CD8-positive, alpha-beta T cell (primary cell): ENCODE measurements at regions of chr6 and their contacts with region 1.

Region 1: GRCh38 chr6:107847844-107848802 is 24.0 kb upstream of the SCML4 start:
- DNase-seq: peak; percentile 62 to 93 (median 79)
- ATAC-seq: peak; percentile 89
- H3K4me3 ChIP-seq: peak overlapping the region; percentile 54 to 62
- H3K4me3 Mint-ChIP-seq: peak overlapping the region; percentile 82
- H3K27ac ChIP-seq: peak overlapping the region in 1 of 2 experiments; percentile 43
- H3K27ac Mint-ChIP-seq: peak overlapping the region; percentile 85
- H3K4me1 ChIP-seq: peaks cover 14% of the 10 kb centered on the region
- H3K4me1 Mint-ChIP-seq: peaks cover 24% of the 10 kb centered on the region
- H3K27me3 ChIP-seq: no peaks in the 10 kb centered on the region
- H3K27me3 Mint-ChIP-seq: no peaks in the 10 kb centered on the region
- CTCF ChIP-seq: peak; percentile 97

Region 2: GRCh38 chr6:107691062-107691751 is 156.9 kb before region 1 on chr6:
- CTCF ChIA-PET with region 1: interaction called, 13 read pairs
- POLR2A ChIA-PET with region 1: no interaction called
- intact Hi-C with region 1: no loop called
- DNase-seq: no peak
- ATAC-seq: no peak
- H3K4me3 ChIP-seq: no peak overlapping the region
- H3K4me3 Mint-ChIP-seq: no peak overlapping the region
- H3K27ac ChIP-seq: no peak overlapping the region
- H3K27ac Mint-ChIP-seq: no peak overlapping the region
- H3K4me1 ChIP-seq: no peaks in the 10 kb centered on the region
- H3K4me1 Mint-ChIP-seq: no peaks in the 10 kb centered on the region
- H3K27me3 ChIP-seq: no peaks in the 10 kb centered on the region
- H3K27me3 Mint-ChIP-seq: no peaks in the 10 kb centered on the region
- CTCF ChIP-seq: no peak

Region 3: DNA sequence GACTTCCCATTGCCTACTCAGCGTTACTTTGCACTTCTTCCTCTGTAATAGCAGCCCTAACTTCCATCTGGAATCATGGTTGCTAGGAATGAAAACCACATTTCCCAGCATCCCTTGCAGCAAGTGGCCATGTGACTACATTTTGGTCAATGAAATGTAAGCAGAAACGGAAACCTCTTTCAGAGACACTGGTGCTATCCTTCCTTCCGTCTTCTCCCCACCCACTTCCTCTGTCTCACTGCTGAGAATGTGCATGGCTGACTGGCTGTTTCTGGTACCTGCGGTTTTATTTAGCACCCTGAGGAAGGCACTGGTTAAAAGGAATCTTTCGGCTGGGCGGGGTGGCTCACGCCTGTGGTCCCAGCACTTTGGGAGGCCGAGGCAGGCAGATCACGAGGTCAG is 131.4 kb before region 1 on chr6:
- CTCF ChIA-PET with region 1: interaction called, 246 read pairs
- POLR2A ChIA-PET with region 1: interaction called, 5 read pairs
- intact Hi-C with region 1: no loop called
- DNase-seq: peak; percentile 46 to 95 (median 76)
- ATAC-seq: peak; percentile 85
- H3K4me3 ChIP-seq: no peak overlapping the region
- H3K4me3 Mint-ChIP-seq: peak overlapping the region; percentile 68
- H3K27ac ChIP-seq: peak overlapping the region in 1 of 2 experiments; percentile 79
- H3K27ac Mint-ChIP-seq: peak overlapping the region; percentile 91
- H3K4me1 ChIP-seq: peaks cover 54% of the 10 kb centered on the region
- H3K4me1 Mint-ChIP-seq: peaks cover 77% of the 10 kb centered on the region
- H3K27me3 ChIP-seq: no peaks in the 10 kb centered on the region
- H3K27me3 Mint-ChIP-seq: no peaks in the 10 kb centered on the region
- CTCF ChIP-seq: no peak

Region 4: DNA sequence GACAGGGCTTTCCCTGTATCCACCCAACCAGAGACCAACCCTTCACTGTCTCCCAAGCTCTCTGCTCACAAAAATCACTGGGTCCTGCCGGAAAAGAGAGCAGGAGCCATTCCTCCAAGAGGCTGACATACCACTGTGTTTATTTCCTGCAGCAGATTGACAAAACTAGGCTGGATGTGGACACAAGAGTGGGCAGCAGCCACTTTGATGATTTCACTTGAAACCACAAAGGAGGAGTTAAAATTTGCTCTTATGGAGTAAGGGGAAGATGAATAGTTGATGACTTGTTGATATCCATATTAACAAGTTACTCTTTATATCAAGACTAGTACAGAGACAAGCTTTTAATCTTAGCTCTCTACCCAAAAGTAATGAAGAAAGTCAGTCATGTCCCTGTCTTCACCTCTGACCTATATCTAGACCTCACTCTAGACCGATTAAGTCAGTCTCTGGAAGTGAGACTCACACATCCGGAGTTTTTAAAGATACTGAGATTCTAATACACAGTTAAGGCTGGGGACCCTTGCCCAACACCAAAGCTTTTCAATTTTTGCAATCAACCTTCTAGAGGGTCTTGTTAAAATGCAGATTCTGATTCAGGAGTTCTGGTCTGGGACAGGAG is 97.8 kb before region 1 on chr6:
- CTCF ChIA-PET with region 1: interaction called, 52 read pairs
- POLR2A ChIA-PET with region 1: no interaction called
- intact Hi-C with region 1: no loop called
- DNase-seq: no peak
- ATAC-seq: no peak
- H3K4me3 ChIP-seq: no peak overlapping the region
- H3K4me3 Mint-ChIP-seq: no peak overlapping the region
- H3K27ac ChIP-seq: no peak overlapping the region
- H3K27ac Mint-ChIP-seq: no peak overlapping the region
- H3K4me1 ChIP-seq: peaks cover 22% of the 10 kb centered on the region
- H3K4me1 Mint-ChIP-seq: peaks cover 63% of the 10 kb centered on the region
- H3K27me3 ChIP-seq: no peaks in the 10 kb centered on the region
- H3K27me3 Mint-ChIP-seq: no peaks in the 10 kb centered on the region
- CTCF ChIP-seq: no peak

Region 5: GRCh38 chr6:107786709-107787588 is 61.2 kb before region 1 on chr6:
- CTCF ChIA-PET with region 1: interaction called, 34 read pairs
- POLR2A ChIA-PET with region 1: interaction called, 5 read pairs
- intact Hi-C with region 1: no loop called
- DNase-seq: peak in 8 of 9 experiments; percentile 32 to 75 (median 56)
- ATAC-seq: peak; percentile 75
- H3K4me3 ChIP-seq: peak overlapping the region; percentile 7 to 19
- H3K4me3 Mint-ChIP-seq: peak overlapping the region; percentile 72
- H3K27ac ChIP-seq: peak overlapping the region; percentile 29 to 78
- H3K27ac Mint-ChIP-seq: peak overlapping the region; percentile 85
- H3K4me1 ChIP-seq: peaks cover 78% of the 10 kb centered on the region
- H3K4me1 Mint-ChIP-seq: peaks cover 87% of the 10 kb centered on the region
- H3K27me3 ChIP-seq: no peaks in the 10 kb centered on the region
- H3K27me3 Mint-ChIP-seq: no peaks in the 10 kb centered on the region
- CTCF ChIP-seq: no peak

Region 6: GRCh38 chr6:107811591-107812218 is 36.4 kb before region 1 on chr6:
- CTCF ChIA-PET with region 1: interaction called, 76 read pairs
- POLR2A ChIA-PET with region 1: no interaction called
- intact Hi-C with region 1: no loop called
- DNase-seq: peak in 3 of 9 experiments; percentile 22 to 37 (median 28)
- ATAC-seq: peak; percentile 44
- H3K4me3 ChIP-seq: no peak overlapping the region
- H3K4me3 Mint-ChIP-seq: no peak overlapping the region
- H3K27ac ChIP-seq: no peak overlapping the region
- H3K27ac Mint-ChIP-seq: peak overlapping the region; percentile 64
- H3K4me1 ChIP-seq: peaks cover 30% of the 10 kb centered on the region
- H3K4me1 Mint-ChIP-seq: peaks cover 82% of the 10 kb centered on the region
- H3K27me3 ChIP-seq: no peaks in the 10 kb centered on the region
- H3K27me3 Mint-ChIP-seq: no peaks in the 10 kb centered on the region
- CTCF ChIP-seq: no peak

Region 7: DNA sequence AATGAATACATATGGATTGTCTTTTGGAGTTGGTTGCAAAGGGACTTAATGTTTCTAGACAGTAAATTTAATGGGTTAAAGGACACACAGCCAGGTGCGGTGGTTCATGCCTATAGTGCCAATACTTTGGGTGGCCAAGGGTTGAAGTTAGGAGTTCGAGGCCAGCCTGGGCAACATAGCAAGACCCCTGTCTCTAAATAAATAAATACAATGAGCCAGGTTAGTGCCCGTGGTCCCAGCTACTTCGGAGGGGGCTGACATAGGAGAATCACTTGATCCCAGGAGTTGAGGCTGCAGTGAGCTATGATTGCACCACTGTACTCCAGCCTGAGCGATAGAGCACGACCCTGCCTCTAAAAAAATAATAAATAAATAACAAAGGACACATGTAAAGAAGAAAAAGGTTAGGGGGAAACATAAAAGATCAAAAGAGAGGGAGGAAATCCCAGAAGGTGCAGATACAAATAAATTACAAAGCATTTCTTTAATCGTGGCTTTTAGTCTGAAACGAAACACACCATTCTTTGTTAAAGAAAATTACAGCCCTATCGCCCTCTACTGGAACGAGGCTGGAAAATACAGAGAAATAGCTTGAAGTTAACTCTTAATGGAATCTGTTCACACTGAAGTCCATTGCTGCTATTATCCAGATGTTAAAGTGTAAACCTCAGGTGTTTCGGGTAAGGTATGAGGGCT is 18.6 kb after region 1 on chr6:
- CTCF ChIA-PET with region 1: interaction called, 33 read pairs
- POLR2A ChIA-PET with region 1: no interaction called
- intact Hi-C with region 1: no loop called
- DNase-seq: peak in 6 of 9 experiments; percentile 9 to 75 (median 34)
- ATAC-seq: peak; percentile 70
- H3K4me3 ChIP-seq: no peak overlapping the region
- H3K4me3 Mint-ChIP-seq: no peak overlapping the region
- H3K27ac ChIP-seq: no peak overlapping the region
- H3K27ac Mint-ChIP-seq: no peak overlapping the region
- H3K4me1 ChIP-seq: no peaks in the 10 kb centered on the region
- H3K4me1 Mint-ChIP-seq: no peaks in the 10 kb centered on the region
- H3K27me3 ChIP-seq: no peaks in the 10 kb centered on the region
- H3K27me3 Mint-ChIP-seq: no peaks in the 10 kb centered on the region
- CTCF ChIP-seq: peak; percentile 82

Region 8: GRCh38 chr6:108621117-108621516 is 773.0 kb after region 1 on chr6:
- CTCF ChIA-PET with region 1: no interaction called
- POLR2A ChIA-PET with region 1: no interaction called
- intact Hi-C with region 1: no loop called
- DNase-seq: peak in 1 of 9 experiments; percentile 20
- ATAC-seq: no peak
- H3K4me3 ChIP-seq: no peak overlapping the region
- H3K4me3 Mint-ChIP-seq: no peak overlapping the region
- H3K27ac ChIP-seq: no peak overlapping the region
- H3K27ac Mint-ChIP-seq: no peak overlapping the region
- H3K4me1 ChIP-seq: peaks cover 12% of the 10 kb centered on the region
- H3K4me1 Mint-ChIP-seq: peaks cover 64% of the 10 kb centered on the region
- H3K27me3 ChIP-seq: no peaks in the 10 kb centered on the region
- H3K27me3 Mint-ChIP-seq: no peaks in the 10 kb centered on the region
- CTCF ChIP-seq: no peak